WTC11 (cell line): ENCODE measurements at regions of chr10 and their contacts with region 1.

Region 1: GRCh38 chr10:34732926-34733325 is 82.2 kb downstream of the PARD3 start:
- DNase-seq: no peak
- ATAC-seq: peak; percentile 80
- H3K4me3 Mint-ChIP-seq: no peak overlapping the region
- H3K27ac Mint-ChIP-seq: peak overlapping the region; percentile 76; the same call in 1 of the 2 replicates
- H3K4me1 Mint-ChIP-seq: peaks cover 34% of the 10 kb centered on the region
- H3K27me3 Mint-ChIP-seq: no peaks in the 10 kb centered on the region
- CTCF ChIP-seq: 0 out of 2 replicates have a peak, but pooled peaks have one; percentile 34

Region 2: DNA sequence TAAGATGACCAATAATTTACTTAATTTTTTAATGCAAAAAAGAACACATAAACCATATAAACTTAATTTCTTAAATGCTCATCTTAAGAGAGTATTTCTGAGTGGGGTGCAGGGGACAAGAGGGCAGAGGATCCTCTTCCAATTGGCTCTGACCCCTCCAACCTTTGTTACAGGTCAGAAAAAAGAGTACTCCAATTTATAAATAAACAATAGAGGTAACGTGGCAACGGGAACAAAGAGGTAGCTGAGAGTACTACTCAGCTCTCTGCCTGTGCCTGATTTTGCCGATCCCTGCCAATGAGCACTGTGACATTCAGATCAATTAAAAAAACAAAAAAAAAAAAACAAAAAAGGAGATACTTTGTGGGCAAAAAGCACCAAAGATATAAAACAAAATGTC is 225.7 kb before region 1 on chr10:
- CTCF ChIA-PET with region 1: no interaction called
- POLR2A ChIA-PET with region 1: no interaction called
- DNase-seq: no peak
- ATAC-seq: no peak; the same call in 1 of the 2 replicates
- H3K4me3 Mint-ChIP-seq: no peak overlapping the region
- H3K27ac Mint-ChIP-seq: no peak overlapping the region
- H3K4me1 Mint-ChIP-seq: peaks cover 41% of the 10 kb centered on the region
- H3K27me3 Mint-ChIP-seq: no peaks in the 10 kb centered on the region
- CTCF ChIP-seq: no peak

Region 3: DNA sequence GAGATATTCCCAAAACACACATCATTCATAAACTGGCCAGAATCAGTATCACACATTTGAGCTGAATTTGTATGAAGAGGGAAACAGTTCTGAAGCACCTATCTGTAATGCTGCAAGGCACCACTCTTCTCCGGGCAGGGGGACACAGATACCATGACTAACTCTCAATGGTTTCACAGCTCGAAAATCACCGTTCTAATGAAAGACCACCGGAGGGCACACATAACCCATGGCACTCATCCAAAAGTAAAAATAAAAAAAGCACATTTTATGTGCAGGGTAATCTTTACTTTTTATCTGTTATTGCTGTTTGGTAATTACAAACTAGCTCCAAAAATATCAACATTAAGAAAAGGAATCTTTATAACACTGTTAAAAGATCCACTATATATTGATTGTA is 55.3 kb before region 1 on chr10:
- CTCF ChIA-PET with region 1: interaction called, 11 read pairs
- POLR2A ChIA-PET with region 1: no interaction called
- DNase-seq: no peak
- ATAC-seq: peak; percentile 58
- H3K4me3 Mint-ChIP-seq: no peak overlapping the region
- H3K27ac Mint-ChIP-seq: no peak overlapping the region
- H3K4me1 Mint-ChIP-seq: peaks cover 37% of the 10 kb centered on the region
- H3K27me3 Mint-ChIP-seq: no peaks in the 10 kb centered on the region
- CTCF ChIP-seq: no peak

Region 4: GRCh38 chr10:34753014-34753757 is 20.3 kb after region 1 on chr10:
- CTCF ChIA-PET with region 1: interaction called, 20 read pairs
- POLR2A ChIA-PET with region 1: interaction called, 4 read pairs
- DNase-seq: no peak
- ATAC-seq: peak; percentile 62
- H3K4me3 Mint-ChIP-seq: peak overlapping the region; percentile 7; the same call in 1 of the 2 replicates
- H3K27ac Mint-ChIP-seq: peak overlapping the region; percentile 73
- H3K4me1 Mint-ChIP-seq: peaks cover 35% of the 10 kb centered on the region
- H3K27me3 Mint-ChIP-seq: no peaks in the 10 kb centered on the region
- CTCF ChIP-seq: no peak

Region 5: DNA sequence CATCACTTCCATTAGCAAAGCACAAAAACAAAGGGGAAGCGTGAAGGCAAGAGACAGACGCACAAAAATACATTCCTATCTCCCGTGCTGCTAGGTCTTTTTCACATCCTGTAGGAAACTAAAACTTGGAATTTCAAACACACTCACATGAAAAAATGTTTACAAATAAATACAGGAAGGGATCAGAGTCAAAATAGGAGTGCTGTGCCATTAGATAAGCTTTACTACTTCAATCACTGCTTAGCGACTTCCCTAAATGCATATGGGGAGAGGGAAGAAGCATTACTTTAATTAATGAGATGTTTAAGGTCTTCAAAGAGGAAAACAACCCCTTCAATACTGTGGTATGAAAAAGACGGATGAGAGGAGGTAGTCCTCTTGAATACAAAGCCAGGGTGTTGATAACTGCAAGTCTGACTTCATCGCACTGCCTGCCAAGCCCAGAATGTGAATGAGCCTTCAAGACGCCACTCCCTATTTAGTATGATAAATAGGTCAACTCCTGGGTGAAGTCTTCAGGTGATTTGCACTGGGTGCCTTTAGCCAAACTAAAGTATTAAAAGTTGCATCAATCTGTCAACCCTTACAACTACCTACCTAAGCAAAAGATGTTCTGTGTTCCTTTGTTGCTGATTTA is 68.3 kb after region 1 on chr10:
- CTCF ChIA-PET with region 1: interaction called, 10 read pairs
- POLR2A ChIA-PET with region 1: no interaction called
- DNase-seq: no peak
- ATAC-seq: peak; percentile 60; the same call in 1 of the 2 replicates
- H3K4me3 Mint-ChIP-seq: no peak overlapping the region
- H3K27ac Mint-ChIP-seq: peak overlapping the region; percentile 61
- H3K4me1 Mint-ChIP-seq: peaks cover 32% of the 10 kb centered on the region
- H3K27me3 Mint-ChIP-seq: no peaks in the 10 kb centered on the region
- CTCF ChIP-seq: no peak

Region 6: GRCh38 chr10:34815185-34816084 is 82.5 kb after region 1 on chr10 and contains the start of gene PARD3:
- CTCF ChIA-PET with region 1: interaction called, 32 read pairs
- POLR2A ChIA-PET with region 1: no interaction called
- DNase-seq: peak; percentile 69
- ATAC-seq: peak; percentile 63
- H3K4me3 Mint-ChIP-seq: peak within 1 kb of the TSS; percentile 89
- H3K27ac Mint-ChIP-seq: peak within 1 kb of the TSS; percentile 32; the same call in 1 of the 2 replicates
- H3K4me1 Mint-ChIP-seq: peaks cover 38% of the 10 kb centered on the region
- H3K27me3 Mint-ChIP-seq: peaks cover 20% of the 10 kb centered on the region
- CTCF ChIP-seq: no peak
- total RNA-seq, gene PARD3: 44.9 to 51.8 TPM (median 47.0 TPM) in 3 replicates